ENCODE measurements at regions of chr11 and their contacts with region 1.

Region 1: GRCh38 chr11:35058669-35059434 is 80.1 kb upstream of the CD44 start:
- DNase-seq: no peak
- H3K4me3 Mint-ChIP-seq: no peak overlapping the region
- H3K27ac Mint-ChIP-seq: peak overlapping the region; percentile 38
- H3K4me1 Mint-ChIP-seq: peaks cover 29% of the 10 kb centered on the region
- H3K27me3 Mint-ChIP-seq: no peaks in the 10 kb centered on the region

Region 2: GRCh38 chr11:35047179-35047578 is 11.7 kb before region 1 on chr11:
- CTCF ChIA-PET with region 1: interaction called, 3 read pairs
- POLR2A ChIA-PET with region 1: interaction called, 15 read pairs
- DNase-seq: peak; percentile 63
- H3K4me3 Mint-ChIP-seq: no peak overlapping the region
- H3K27ac Mint-ChIP-seq: peak overlapping the region; percentile 74
- H3K4me1 Mint-ChIP-seq: peaks cover 74% of the 10 kb centered on the region
- H3K27me3 Mint-ChIP-seq: peaks cover 4% of the 10 kb centered on the region

Measured in activated CD4-positive, alpha-beta memory T cell treated with anti-CD3 and anti-CD28 coated beads, Interleukin-2, amount 10 ng/mL, durations not matched to agents 7 days and 5 days (primary cell).